CD8-positive, alpha-beta memory T cell (primary cell): ENCODE measurements at regions of chr12 and their contacts with region 1.

Region 1: GRCh38 chr12:96445691-96446583 is 43.4 kb upstream of the CFAP54 start:
- DNase-seq: peak; percentile 13 to 86 (median 77)
- H3K4me3 ChIP-seq: no peak overlapping the region
- H3K4me3 Mint-ChIP-seq: peak overlapping the region; percentile 1 to 80 (median 55)
- H3K27ac ChIP-seq: peak overlapping the region; percentile 72
- H3K27ac Mint-ChIP-seq: peak overlapping the region; percentile 93 to 100 (median 98)
- H3K4me1 ChIP-seq: peaks cover 33% of the 10 kb centered on the region
- H3K4me1 Mint-ChIP-seq: peaks cover 35 to 52% (median 50%) of the 10 kb centered on the region in 3 donors
- H3K27me3 ChIP-seq: no peaks in the 10 kb centered on the region
- H3K27me3 Mint-ChIP-seq: no peaks in the 10 kb centered on the region

Region 2: GRCh38 chr12:95003921-95004272 is 1442.0 kb before region 1 on chr12:
- CTCF ChIA-PET with region 1: no interaction called
- POLR2A ChIA-PET with region 1: interaction called, 10 read pairs
- DNase-seq: no peak
- H3K4me3 ChIP-seq: peak overlapping the region; percentile 92
- H3K4me3 Mint-ChIP-seq: peak overlapping the region; percentile 89 to 97 (median 95)
- H3K27ac ChIP-seq: peak overlapping the region; percentile 81
- H3K27ac Mint-ChIP-seq: peak overlapping the region; percentile 85 to 97 (median 94)
- H3K4me1 ChIP-seq: peaks cover 45% of the 10 kb centered on the region
- H3K4me1 Mint-ChIP-seq: peaks cover 39 to 50% (median 49%) of the 10 kb centered on the region in 3 donors
- H3K27me3 ChIP-seq: no peaks in the 10 kb centered on the region
- H3K27me3 Mint-ChIP-seq: peaks cover 0 to 3% of the 10 kb centered on the region in 2 donors

Region 3: GRCh38 chr12:96466939-96467751 is 21.2 kb after region 1 on chr12:
- CTCF ChIA-PET with region 1: no interaction called
- POLR2A ChIA-PET with region 1: no interaction called
- DNase-seq: no peak
- H3K4me3 ChIP-seq: no peak overlapping the region
- H3K4me3 Mint-ChIP-seq: no peak overlapping the region
- H3K27ac ChIP-seq: no peak overlapping the region
- H3K27ac Mint-ChIP-seq: peak overlapping the region in 2 of 8 donors; percentile 41 to 68
- H3K4me1 ChIP-seq: no peaks in the 10 kb centered on the region
- H3K4me1 Mint-ChIP-seq: peaks cover 1 to 3% (median 2%) of the 10 kb centered on the region in 3 donors
- H3K27me3 ChIP-seq: no peaks in the 10 kb centered on the region
- H3K27me3 Mint-ChIP-seq: no peaks in the 10 kb centered on the region

Region 4: DNA sequence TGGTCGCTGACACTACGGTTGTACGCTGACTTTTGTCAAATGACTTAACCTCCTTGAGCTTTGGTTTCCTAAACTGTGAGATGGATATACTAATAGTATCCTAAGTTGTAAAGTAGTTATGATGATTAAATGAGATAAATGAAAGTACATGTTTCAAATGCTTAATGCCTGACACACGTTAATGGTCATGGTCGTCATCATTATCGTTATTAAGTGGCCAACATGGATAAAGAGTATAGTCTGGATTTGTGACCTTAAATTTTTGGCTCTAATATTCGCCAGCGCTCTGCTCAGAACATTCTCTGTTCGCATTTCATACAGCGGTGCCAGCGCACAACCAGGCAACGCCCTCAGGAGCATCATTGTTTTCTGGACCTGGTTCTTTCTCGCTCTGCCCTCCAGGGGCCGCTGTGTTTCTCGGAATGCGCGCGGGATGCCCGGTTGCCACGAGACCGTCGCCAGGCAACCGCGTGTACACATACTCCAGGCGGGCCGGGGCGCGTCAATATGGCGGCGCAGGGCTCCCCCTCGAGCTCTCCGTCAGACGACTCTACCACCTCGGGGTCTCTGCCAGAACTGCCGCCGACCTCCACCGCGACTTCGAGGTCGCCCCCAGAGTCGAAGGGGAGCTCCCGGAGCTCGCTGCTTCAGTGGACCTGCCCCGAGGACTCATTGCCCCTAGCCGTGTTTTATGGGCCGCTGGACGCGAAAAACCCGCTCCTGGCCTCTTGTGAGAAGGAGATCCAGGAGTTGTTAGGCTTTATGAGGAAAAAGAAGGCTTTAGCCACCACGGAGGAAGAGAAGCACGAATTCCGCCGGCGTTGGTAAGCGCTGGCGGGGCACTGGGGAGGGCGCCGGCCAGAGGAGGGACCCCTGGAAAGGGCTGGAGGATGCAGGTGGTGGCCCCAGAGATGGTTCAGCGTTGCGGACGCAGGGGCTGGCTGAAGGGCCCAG is 43.4 kb after region 1 on chr12 and contains the start of gene CFAP54:
- CTCF ChIA-PET with region 1: interaction called, 14 read pairs
- POLR2A ChIA-PET with region 1: no interaction called
- DNase-seq: peak; percentile 92 to 97 (median 93)
- H3K4me3 ChIP-seq: peak within 1 kb of the TSS; percentile 66
- H3K4me3 Mint-ChIP-seq: peak within 1 kb of the TSS; percentile 82 to 94 (median 92)
- H3K27ac ChIP-seq: peak within 1 kb of the TSS; percentile 79
- H3K27ac Mint-ChIP-seq: peak within 1 kb of the TSS; percentile 61 to 99 (median 97)
- H3K4me1 ChIP-seq: peaks cover 20% of the 10 kb centered on the region
- H3K4me1 Mint-ChIP-seq: peaks cover 22 to 41% (median 39%) of the 10 kb centered on the region in 3 donors
- H3K27me3 ChIP-seq: no peaks in the 10 kb centered on the region
- H3K27me3 Mint-ChIP-seq: peaks cover 0 to 7% of the 10 kb centered on the region in 2 donors
- total RNA-seq, gene CFAP54: 0.66 to 0.88 TPM